HepG2 (cell line): ENCODE measurements at regions of chr21 and their contacts with region 1.

Region 1: DNA sequence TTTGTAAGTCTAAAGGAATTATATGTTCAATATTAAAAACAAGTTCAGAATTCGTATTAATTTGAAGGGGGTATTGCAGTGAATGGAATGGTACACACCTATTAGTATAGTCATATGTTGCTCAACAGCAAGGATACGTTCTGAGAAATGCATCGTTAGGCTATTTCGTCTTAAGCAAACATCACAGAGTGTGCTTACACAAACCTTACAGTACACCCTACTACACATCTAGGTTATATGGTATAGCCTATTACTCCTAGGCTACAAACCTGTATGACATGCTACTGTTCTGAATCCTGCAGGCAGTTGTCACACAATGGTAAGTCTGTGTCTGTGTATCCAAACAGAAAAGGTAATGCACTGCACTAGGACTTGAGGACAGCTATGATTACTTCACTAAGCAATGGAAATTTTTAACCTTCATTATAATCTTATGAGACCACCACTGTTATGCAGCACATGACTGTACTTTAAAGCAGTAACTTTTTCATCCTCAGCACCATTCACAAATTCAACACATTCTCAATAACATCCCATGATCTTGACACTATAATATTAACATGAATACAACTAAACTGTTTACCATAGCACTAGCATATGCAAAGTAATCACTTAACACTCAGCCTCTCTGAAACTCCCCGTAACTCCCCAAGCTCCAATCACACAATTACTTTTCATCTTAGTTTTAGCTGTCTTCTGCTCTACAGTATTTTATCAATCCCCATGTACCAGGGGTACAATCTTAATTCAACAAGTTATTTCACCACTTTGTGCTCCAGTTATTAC is 14.4 kb upstream of the PSMG1 start:
- DNase-seq: no peak
- ATAC-seq: no peak
- H3K4me3 ChIP-seq: no peak overlapping the region
- H3K27ac ChIP-seq: no peak overlapping the region
- H3K4me1 ChIP-seq: no peaks in the 10 kb centered on the region
- H3K27me3 ChIP-seq: no peaks in the 10 kb centered on the region
- CTCF ChIP-seq: no peak
- EP300 ChIP-seq: no peak
- POLR2A ChIP-seq: no peak
- RAD21 ChIP-seq: no peak

Region 2: GRCh38 chr21:39051588-39051949 is 146.1 kb before region 1 on chr21:
- CTCF ChIA-PET with region 1: no interaction called
- POLR2A ChIA-PET with region 1: no interaction called
- in situ Hi-C with region 1: no loop called
- intact Hi-C with region 1: no loop called
- DNase-seq: no peak
- ATAC-seq: no peak
- H3K4me3 ChIP-seq: no peak overlapping the region
- H3K27ac ChIP-seq: no peak overlapping the region
- H3K4me1 ChIP-seq: peaks cover 23% of the 10 kb centered on the region
- H3K27me3 ChIP-seq: no peaks in the 10 kb centered on the region
- CTCF ChIP-seq: no peak
- EP300 ChIP-seq: no peak
- POLR2A ChIP-seq: no peak
- RAD21 ChIP-seq: no peak

Region 3: GRCh38 chr21:39217356-39218081 is 19.9 kb after region 1 on chr21:
- CTCF ChIA-PET with region 1: no interaction called
- POLR2A ChIA-PET with region 1: no interaction called
- in situ Hi-C with region 1: no loop called
- intact Hi-C with region 1: no loop called
- DNase-seq: no peak
- ATAC-seq: no peak
- H3K4me3 ChIP-seq: no peak overlapping the region
- H3K27ac ChIP-seq: no peak overlapping the region
- H3K4me1 ChIP-seq: no peaks in the 10 kb centered on the region
- H3K27me3 ChIP-seq: no peaks in the 10 kb centered on the region
- CTCF ChIP-seq: no peak
- EP300 ChIP-seq: no peak
- POLR2A ChIP-seq: no peak
- RAD21 ChIP-seq: no peak

Region 4: GRCh38 chr21:39232861-39233291 is 35.2 kb after region 1 on chr21:
- CTCF ChIA-PET with region 1: no interaction called
- POLR2A ChIA-PET with region 1: no interaction called
- in situ Hi-C with region 1: no loop called
- intact Hi-C with region 1: loop called (anchors 5 kb)
- DNase-seq: no peak
- ATAC-seq: no peak
- H3K4me3 ChIP-seq: no peak overlapping the region
- H3K27ac ChIP-seq: no peak overlapping the region
- H3K4me1 ChIP-seq: no peaks in the 10 kb centered on the region
- H3K27me3 ChIP-seq: no peaks in the 10 kb centered on the region
- CTCF ChIP-seq: no peak
- EP300 ChIP-seq: no peak
- POLR2A ChIP-seq: no peak
- RAD21 ChIP-seq: no peak